GM13977 (cell line): ENCODE measurements at regions of chr3 and their contacts with region 1.

Region 1: DNA sequence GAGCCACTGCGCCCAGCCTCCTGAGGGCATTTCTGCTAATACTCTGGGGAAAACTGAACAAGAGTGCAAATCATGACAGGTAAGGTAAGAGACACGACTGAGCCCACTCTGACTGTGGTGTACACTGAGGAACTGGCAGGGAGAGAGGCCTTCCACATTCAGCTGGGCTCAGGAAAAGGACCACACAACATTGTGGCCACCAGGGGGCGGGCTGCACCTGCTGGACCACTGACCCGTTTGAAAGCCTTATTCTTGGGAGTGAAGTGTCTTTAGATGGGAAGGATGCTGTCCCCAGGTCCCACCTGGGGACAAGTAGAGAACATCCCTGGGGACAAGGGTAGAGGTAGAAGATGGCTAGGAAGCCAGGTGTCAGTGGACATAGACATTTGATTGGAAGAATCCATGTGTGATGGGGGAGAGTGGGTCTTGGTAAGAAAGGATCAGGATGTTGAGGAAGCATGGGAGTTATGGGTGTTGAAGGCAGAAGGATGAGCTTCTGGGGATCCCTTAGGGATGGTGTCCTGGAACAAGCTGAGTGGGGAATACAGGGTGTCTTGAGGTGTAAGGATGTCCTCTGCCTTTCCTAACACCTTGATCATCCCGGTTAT is 6.2 kb upstream of the CTDSPL start:
- DNase-seq: peak; percentile 77
- CTCF ChIP-seq: peak; percentile 97

Region 2: GRCh38 chr3:37290551-37290950 is 564.9 kb before region 1 on chr3:
- in situ Hi-C with region 1: no loop called
- DNase-seq: no peak
- CTCF ChIP-seq: no peak

Region 3: GRCh38 chr3:37627951-37628620 is 227.4 kb before region 1 on chr3:
- in situ Hi-C with region 1: no loop called
- DNase-seq: peak; percentile 13
- CTCF ChIP-seq: no peak

Region 4: DNA sequence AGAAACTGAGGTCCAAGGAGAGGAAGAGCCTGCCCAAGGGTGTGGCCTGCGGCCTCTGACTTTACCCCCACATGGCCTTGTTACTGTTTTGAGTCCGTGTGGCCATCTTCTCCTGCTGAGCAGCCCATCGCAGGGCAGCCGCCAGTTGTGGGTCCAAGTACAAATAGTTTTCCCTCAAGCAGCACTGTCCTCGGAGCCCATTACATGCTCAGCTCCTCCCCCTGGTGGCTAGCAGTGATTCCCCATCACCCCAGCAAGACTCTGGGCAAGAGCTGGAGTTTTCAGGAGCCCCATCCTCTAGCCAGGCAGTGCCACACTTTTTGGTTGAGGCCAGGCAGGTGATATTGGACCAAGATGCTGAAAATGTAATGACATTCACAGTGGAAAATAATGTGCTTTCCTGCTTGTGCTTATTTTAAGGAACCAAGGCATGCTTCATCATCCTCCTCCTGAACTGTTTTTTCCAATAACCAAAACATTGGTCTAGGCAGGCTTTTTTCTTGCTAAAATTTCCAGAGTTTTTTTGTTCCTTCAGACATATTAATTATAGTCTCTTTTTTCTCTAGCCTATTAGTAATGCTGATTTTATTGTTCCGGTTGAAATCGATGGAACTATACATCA is 111.9 kb after region 1 on chr3:
- in situ Hi-C with region 1: loop called (anchors 10 kb)
- DNase-seq: peak; percentile 70
- CTCF ChIP-seq: peak; percentile 87